Activated CD4-positive, alpha-beta T cell treated with anti-CD3 and anti-CD28 coated beads for 36 hours (primary cell): ENCODE measurements at regions of chr20 and their contacts with region 1.

Region 1: DNA sequence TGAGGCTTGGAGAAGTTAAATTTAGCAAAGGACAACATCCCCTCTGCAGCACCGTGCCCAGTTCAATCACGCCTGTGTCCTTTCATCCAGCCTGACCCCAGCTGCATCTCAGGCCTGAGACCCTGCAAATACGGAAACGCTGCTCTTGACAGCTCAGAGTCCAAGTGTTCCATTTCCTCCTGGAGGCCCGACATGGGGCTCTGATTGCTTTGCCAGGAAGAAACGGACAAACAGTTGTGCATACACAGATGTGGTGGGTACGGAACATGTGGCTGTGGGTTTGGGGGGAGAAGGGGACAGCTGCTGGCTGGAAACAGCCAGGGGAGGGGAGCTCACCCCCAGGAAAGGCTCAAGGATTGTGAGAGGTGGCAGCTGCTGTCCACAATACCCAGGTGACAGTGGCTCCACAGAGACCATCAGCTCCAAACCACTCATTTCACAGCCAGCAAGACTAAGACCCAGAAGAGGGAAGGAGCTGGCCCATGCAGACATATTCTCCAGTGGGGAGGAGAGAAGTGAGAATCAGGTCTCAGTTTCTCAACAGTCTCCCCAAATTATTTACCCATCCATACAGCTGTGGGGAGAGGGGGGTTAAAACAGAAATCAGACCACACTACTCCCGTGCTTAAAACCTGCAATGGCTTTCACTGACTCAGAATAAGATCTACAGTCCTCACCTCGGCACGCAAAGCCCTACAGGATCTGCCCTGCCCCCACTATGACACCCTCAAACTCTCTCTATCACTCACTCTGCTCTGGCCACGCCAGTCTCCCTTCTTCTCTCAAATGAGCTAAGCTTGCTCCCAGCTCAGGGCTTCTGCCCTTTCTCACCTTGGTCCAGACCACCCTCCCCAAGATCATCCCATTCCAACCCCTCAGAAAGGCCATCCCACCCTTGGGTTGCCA is 89.1 kb downstream of the PREX1 start:
- DNase-seq: peak; percentile 86
- ATAC-seq: peak; percentile 91
- H3K4me3 Mint-ChIP-seq: peak overlapping the region; percentile 2
- H3K27ac Mint-ChIP-seq: peak overlapping the region; percentile 88
- H3K4me1 Mint-ChIP-seq: peaks cover 41% of the 10 kb centered on the region
- H3K27me3 Mint-ChIP-seq: no peaks in the 10 kb centered on the region

Region 2: DNA sequence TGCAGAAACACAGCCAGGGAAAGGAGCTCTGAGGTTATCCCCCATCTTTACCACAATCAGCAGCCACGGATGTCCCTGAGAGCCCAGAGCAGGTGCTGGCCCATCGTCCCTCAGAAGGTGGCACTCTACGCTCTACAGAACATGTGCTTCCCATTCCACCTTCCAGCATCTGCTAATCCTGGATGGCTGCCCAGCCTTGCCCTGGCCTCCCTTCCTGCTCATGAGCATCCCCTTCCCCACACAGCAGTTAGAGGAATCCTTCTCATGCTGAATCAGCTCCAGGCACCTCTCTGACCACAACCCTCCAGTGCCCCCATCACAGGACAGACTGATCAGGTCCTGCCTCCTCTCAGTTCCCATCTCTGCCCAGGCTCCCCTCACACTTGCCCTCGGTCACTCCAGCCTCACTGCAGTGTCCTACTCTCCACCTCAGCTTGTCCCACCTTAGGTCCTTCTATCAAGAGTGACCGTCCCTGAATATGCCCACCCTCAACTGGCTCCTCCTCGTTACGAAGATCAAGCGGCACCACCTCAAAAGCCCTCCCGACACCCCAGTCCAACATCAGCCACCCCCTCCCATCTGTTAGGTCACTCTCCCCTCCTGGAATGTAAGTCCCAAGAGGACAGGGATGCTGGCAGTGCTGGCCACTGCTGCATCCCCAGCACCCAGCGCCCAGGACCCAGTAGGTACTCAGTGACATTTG is 193.5 kb before region 1 on chr20:
- CTCF ChIA-PET with region 1: no interaction called
- POLR2A ChIA-PET with region 1: no interaction called
- intact Hi-C with region 1: no loop called
- DNase-seq: no peak
- ATAC-seq: no peak
- H3K4me3 Mint-ChIP-seq: no peak overlapping the region
- H3K27ac Mint-ChIP-seq: no peak overlapping the region
- H3K4me1 Mint-ChIP-seq: no peaks in the 10 kb centered on the region
- H3K27me3 Mint-ChIP-seq: peaks cover 15% of the 10 kb centered on the region

Region 3: DNA sequence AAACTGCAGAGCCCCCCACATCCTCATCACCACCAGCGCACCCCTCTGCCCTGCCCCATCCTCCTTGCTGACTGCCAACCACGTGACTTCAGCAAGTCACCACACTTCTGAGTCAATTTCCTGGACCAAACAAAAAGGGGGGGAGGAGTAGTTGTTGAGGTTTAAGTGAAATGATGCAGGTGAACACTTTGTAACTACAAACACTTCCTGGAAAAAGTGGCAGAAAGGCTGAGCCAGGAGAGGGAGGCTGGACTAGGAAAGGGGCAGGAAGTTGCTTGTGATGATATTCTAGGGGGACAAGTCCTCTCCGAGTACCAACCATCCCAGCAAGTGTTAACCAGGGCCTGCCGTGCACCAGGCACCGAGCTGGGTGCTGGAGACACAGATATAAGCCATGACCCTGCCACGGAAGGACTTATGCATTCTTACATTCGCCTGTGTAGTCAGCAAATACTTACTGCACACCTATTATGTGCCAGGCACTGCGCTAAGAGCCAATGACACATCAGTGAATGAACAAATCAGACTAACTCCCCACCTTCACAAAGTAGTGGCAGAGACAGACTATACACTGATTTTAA is 21.8 kb after region 1 on chr20:
- CTCF ChIA-PET with region 1: no interaction called
- POLR2A ChIA-PET with region 1: no interaction called
- intact Hi-C with region 1: loop called (anchors 1 to 2 kb)
- DNase-seq: peak; percentile 78
- ATAC-seq: peak; percentile 87
- H3K4me3 Mint-ChIP-seq: peak overlapping the region; percentile 34
- H3K27ac Mint-ChIP-seq: peak overlapping the region; percentile 96
- H3K4me1 Mint-ChIP-seq: peaks cover 67% of the 10 kb centered on the region
- H3K27me3 Mint-ChIP-seq: no peaks in the 10 kb centered on the region

Region 4: DNA sequence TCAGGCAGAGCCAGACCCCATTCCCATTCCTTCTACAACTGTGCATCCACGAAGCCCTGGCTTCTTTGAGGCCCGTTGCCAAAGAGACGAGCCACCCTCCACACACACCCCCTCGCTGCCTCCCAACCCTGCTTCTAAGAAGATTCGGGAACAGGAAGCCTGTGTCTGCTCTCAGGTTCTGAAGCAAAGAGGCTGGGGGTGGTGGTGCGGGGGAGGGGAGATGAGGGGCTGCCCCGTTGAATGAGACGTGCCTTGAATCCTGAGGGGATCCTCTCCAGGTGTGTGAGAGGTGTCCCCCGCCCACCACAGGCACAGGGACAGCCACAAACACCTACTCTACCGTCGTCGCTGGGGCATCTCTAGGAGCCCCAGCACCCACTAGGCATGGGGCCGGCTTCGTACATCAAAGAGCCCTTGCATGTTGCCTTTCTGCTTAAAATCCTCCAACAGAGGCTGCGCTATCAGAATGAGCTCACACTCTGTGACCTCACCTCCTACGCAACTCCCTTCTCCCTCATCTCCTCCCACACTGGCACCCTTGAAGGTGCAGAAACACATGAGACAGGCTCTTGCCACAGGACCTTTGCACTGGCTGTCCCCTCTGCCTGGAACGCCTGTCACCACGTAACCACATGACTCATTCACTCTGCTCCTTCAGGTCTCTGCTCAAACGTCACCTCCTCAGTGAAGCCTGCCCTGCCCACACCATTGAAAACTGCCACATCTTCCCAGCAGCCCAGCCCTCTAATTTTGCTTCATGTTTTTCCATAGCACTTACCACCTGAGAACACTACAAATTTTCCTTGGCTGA is 30.6 kb after region 1 on chr20:
- CTCF ChIA-PET with region 1: no interaction called
- POLR2A ChIA-PET with region 1: interaction called, 3 read pairs
- intact Hi-C with region 1: loop called (anchors 1 kb)
- DNase-seq: peak; percentile 96
- ATAC-seq: peak; percentile 90
- H3K4me3 Mint-ChIP-seq: peak overlapping the region; percentile 48
- H3K27ac Mint-ChIP-seq: peak overlapping the region; percentile 81
- H3K4me1 Mint-ChIP-seq: peaks cover 80% of the 10 kb centered on the region
- H3K27me3 Mint-ChIP-seq: no peaks in the 10 kb centered on the region

Region 5: GRCh38 chr20:48787861-48788375 is 49.3 kb after region 1 on chr20:
- CTCF ChIA-PET with region 1: no interaction called
- POLR2A ChIA-PET with region 1: interaction called, 3 read pairs
- intact Hi-C with region 1: loop called (anchors 1 to 5 kb)
- DNase-seq: no peak
- ATAC-seq: no peak
- H3K4me3 Mint-ChIP-seq: no peak overlapping the region
- H3K27ac Mint-ChIP-seq: peak overlapping the region; percentile 16
- H3K4me1 Mint-ChIP-seq: peaks cover 58% of the 10 kb centered on the region
- H3K27me3 Mint-ChIP-seq: no peaks in the 10 kb centered on the region

Region 6: GRCh38 chr20:48846498-48847485 is 108.1 kb after region 1 on chr20:
- CTCF ChIA-PET with region 1: no interaction called
- POLR2A ChIA-PET with region 1: no interaction called
- intact Hi-C with region 1: loop called in 1 of 2 experiments (anchors 1 kb)
- DNase-seq: peak; percentile 85
- ATAC-seq: peak; percentile 93
- H3K4me3 Mint-ChIP-seq: no peak overlapping the region
- H3K27ac Mint-ChIP-seq: peak overlapping the region; percentile 89
- H3K4me1 Mint-ChIP-seq: peaks cover 23% of the 10 kb centered on the region
- H3K27me3 Mint-ChIP-seq: no peaks in the 10 kb centered on the region